ENCODE measurements at regions of chr2 and their contacts with region 1.

Region 1: GRCh38 chr2:230589497-230590015 is 123.1 kb upstream of the CAB39 start:
- DNase-seq: peak; percentile 98
- ATAC-seq: peak; percentile 90
- H3K4me3 ChIP-seq: no peak overlapping the region
- H3K27ac ChIP-seq: peak overlapping the region; percentile 96
- H3K4me1 ChIP-seq: peaks cover 62% of the 10 kb centered on the region
- H3K27me3 ChIP-seq: no peaks in the 10 kb centered on the region
- CTCF ChIP-seq: 0 out of 6 replicates have a peak, but pooled peaks of 1 of the 3 experiments have one; percentile 3
- EP300 ChIP-seq: peak; percentile 91 to 98
- POLR2A ChIP-seq: peak; percentile 77
- RAD21 ChIP-seq: peak; percentile 38; the same call in 1 of the 2 replicates

Region 2: DNA sequence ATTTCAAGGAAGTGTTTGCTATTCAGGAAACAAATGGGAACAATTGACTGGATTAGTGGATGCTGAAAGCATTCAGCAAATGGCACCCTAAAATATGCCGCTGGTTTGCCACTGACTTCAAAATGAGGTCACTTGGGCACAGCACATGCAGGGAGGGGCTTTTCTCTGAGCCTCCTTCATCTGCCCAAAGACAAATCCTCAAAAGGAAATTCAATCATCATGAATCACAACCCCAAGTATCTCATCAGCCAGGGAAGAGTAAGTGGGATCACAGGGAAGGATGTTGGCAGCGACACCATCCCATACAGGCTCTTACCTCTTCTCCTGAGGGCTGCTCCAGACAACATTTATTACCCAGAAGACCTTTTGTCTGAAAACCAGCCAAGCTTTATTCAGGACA is 276.9 kb before region 1 on chr2:
- CTCF ChIA-PET with region 1: no interaction called
- POLR2A ChIA-PET with region 1: no interaction called
- RAD21 ChIA-PET with region 1: no interaction called
- SMC1A ChIA-PET with region 1: no interaction called
- in situ Hi-C with region 1: no loop called
- intact Hi-C with region 1: no loop called
- DNase-seq: no peak
- ATAC-seq: no peak
- H3K4me3 ChIP-seq: no peak overlapping the region
- H3K27ac ChIP-seq: no peak overlapping the region
- H3K4me1 ChIP-seq: peaks cover 6% of the 10 kb centered on the region
- H3K27me3 ChIP-seq: no peaks in the 10 kb centered on the region
- CTCF ChIP-seq: no peak
- EP300 ChIP-seq: no peak
- POLR2A ChIP-seq: no peak
- RAD21 ChIP-seq: no peak

Region 3: GRCh38 chr2:230326453-230327417 is 262.8 kb before region 1 on chr2 and contains the start of gene SP140L:
- CTCF ChIA-PET with region 1: no interaction called
- POLR2A ChIA-PET with region 1: interaction called, 12 read pairs
- RAD21 ChIA-PET with region 1: interaction called, 3 read pairs
- SMC1A ChIA-PET with region 1: interaction called, 4 read pairs
- in situ Hi-C with region 1: no loop called
- intact Hi-C with region 1: no loop called
- DNase-seq: peak; percentile 55
- ATAC-seq: peak; percentile 96
- H3K4me3 ChIP-seq: peak within 1 kb of the TSS; percentile 78
- H3K27ac ChIP-seq: peak within 1 kb of the TSS; percentile 96
- H3K4me1 ChIP-seq: no peaks in the 10 kb centered on the region
- H3K27me3 ChIP-seq: no peaks in the 10 kb centered on the region
- CTCF ChIP-seq: no peak
- EP300 ChIP-seq: no peak
- POLR2A ChIP-seq: peak; percentile 81
- RAD21 ChIP-seq: no peak
- polyA plus RNA-seq, gene SP140L: 4.7 to 6.1 TPM

Region 4: GRCh38 chr2:230356084-230356483 is 233.5 kb before region 1 on chr2:
- CTCF ChIA-PET with region 1: no interaction called
- POLR2A ChIA-PET with region 1: no interaction called
- RAD21 ChIA-PET with region 1: no interaction called
- SMC1A ChIA-PET with region 1: no interaction called
- in situ Hi-C with region 1: no loop called
- intact Hi-C with region 1: no loop called
- DNase-seq: no peak
- ATAC-seq: no peak
- H3K4me3 ChIP-seq: no peak overlapping the region
- H3K27ac ChIP-seq: no peak overlapping the region
- H3K4me1 ChIP-seq: no peaks in the 10 kb centered on the region
- H3K27me3 ChIP-seq: no peaks in the 10 kb centered on the region
- CTCF ChIP-seq: no peak
- EP300 ChIP-seq: no peak
- POLR2A ChIP-seq: no peak
- RAD21 ChIP-seq: no peak

Region 5: DNA sequence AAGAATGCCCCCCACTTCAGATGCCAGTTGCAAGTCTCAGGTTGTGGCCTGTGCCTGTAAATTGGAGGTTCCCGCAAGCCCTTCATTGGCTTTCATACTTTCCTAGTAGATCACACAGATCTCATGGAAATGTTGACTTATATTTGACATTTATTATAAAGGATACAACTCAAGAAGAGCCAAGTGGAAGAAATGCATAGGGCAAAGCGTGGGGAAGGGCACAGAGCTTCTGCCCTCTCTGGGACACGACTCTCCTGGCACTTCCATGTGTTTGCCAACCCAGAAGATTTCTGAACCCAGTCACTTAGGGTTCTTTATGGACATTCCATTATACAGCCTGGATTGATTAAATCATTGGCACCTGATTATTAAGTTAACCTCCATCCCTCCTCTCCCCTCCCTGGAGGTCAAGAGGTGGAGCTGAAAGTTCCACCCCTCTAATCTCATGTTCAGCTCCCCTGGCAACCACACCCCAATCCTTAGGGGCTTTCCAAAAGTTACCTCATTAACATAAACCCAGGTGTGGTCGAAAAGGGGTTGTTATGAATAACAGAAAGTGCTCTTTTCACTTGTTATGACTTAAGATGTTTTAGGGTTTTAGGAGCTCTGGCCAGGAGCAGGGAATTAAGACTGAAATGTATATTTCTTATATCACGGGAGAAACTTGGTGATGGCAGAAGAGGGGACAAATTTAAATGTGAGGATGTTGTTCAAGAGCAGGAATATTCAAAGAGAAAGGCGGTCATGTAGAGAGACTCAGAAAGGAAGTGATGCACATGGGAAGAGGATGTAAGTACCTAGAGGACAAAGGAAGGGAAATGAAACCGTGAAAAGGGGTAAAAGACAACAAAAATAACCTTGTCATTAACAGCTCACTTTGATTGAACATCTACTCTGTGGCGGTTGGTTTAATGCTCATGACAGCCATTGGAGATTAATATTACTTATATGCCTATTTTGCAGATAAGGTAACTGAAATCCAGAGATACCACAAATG is 141.8 kb before region 1 on chr2:
- CTCF ChIA-PET with region 1: no interaction called
- POLR2A ChIA-PET with region 1: no interaction called
- RAD21 ChIA-PET with region 1: interaction called, 6 read pairs
- SMC1A ChIA-PET with region 1: interaction called, 12 read pairs
- in situ Hi-C with region 1: no loop called
- intact Hi-C with region 1: loop called (anchors 5 kb)
- DNase-seq: peak; percentile 84
- ATAC-seq: peak; percentile 87
- H3K4me3 ChIP-seq: 0 out of 2 replicates have a peak overlapping the region, but pooled peaks have one; percentile 13
- H3K27ac ChIP-seq: peak overlapping the region; percentile 89
- H3K4me1 ChIP-seq: peaks cover 53% of the 10 kb centered on the region
- H3K27me3 ChIP-seq: no peaks in the 10 kb centered on the region
- CTCF ChIP-seq: no peak
- EP300 ChIP-seq: peak; percentile 80 to 84; a peak in 3 of 4 replicates
- POLR2A ChIP-seq: no peak
- RAD21 ChIP-seq: no peak

Region 6: DNA sequence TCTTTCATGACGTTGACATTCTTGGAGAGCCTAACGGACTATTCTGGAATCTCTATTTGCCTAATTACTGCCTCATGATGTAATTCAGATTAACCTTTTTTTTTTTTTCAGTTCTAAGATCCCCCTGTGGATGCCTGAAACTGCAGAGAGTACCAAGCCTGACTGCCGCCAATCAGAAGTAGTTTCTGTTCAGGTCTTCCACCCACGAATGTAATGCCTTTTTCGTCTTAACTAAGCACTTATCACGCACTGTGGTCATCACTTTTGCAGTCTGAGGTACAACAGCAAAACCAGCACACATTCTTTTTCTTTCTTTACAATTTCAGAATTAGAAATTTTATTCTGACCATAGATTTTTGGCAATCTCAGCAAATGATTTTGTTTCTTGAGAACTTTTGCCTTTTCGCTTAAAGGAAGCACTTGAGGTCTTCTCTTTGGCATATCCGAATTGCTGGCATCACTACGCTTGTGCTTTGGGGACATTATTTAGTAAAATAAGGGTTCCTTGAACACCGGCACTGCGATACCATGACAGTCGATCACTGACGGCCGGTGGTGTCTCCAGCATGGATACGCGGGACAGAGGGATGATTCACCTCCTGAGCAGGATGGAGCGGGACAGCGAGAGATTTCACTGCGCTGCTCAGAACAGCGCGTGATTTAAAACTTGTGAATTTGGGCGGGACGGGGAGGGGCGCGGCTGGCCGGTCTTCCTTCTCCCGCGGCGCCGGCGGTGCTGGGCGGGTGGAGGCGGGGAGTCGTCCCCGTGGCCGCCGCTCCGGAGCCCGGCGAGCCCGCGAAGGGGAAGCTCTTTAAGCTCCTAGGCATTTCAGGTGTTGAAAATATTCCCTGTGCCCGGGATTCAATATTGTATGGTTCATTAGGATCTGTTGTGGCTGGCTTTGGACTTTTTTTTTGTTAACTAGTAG is 367.5 kb after region 1 on chr2:
- CTCF ChIA-PET with region 1: no interaction called
- POLR2A ChIA-PET with region 1: no interaction called
- RAD21 ChIA-PET with region 1: no interaction called
- SMC1A ChIA-PET with region 1: no interaction called
- in situ Hi-C with region 1: no loop called
- intact Hi-C with region 1: loop called (anchors 10 kb)
- DNase-seq: peak; percentile 91
- ATAC-seq: peak; percentile 79
- H3K4me3 ChIP-seq: peak overlapping the region; percentile 72
- H3K27ac ChIP-seq: peak overlapping the region; percentile 99
- H3K4me1 ChIP-seq: peaks cover 54% of the 10 kb centered on the region
- H3K27me3 ChIP-seq: no peaks in the 10 kb centered on the region
- CTCF ChIP-seq: no peak
- EP300 ChIP-seq: peak; percentile 84 to 92; a peak in 2 of 4 replicates
- POLR2A ChIP-seq: peak; percentile 87
- RAD21 ChIP-seq: peak; percentile 37; the same call in 1 of the 2 replicates